ENCODE measurements at regions of chr17 and their contacts with region 1.

Region 1: DNA sequence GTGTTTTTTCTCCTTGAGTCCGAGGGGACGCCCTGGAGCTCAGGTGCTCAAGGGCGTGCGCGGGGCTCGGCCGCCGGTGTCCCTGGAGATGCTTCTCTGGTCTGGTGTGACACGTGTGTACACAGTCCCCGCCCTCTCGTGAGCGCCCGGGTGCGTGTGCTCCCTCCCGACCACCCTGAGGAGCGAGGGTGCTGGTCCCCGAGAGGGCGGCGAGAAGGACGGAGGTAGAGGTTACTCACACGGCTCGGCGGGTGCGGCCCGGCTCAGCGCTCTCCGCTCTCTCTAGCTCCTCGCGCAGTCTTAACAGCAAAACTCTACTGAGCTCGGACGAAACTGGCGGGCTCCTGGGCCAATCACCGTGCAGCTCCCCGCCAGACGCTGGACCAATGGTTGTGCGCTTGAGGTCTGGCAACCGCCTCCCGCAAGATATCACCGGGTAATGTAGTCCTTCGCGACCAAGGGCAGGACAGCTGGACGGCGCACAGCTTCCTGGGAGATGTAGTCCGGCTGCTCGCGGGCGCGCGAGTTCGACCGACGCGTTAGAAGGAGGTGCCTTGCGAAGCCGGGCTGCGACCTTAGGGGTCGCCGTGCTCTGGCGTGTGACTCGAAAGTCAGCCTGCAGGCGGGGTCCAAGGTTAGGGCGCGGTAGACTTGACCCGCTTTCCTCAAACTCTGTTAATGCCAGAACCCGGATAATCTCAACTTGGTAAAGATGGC is at the start of gene SLC25A19:
- DNase-seq: peak; percentile 99
- H3K4me3 Mint-ChIP-seq: peak within 1 kb of the TSS; percentile 98
- H3K27ac Mint-ChIP-seq: peak within 1 kb of the TSS; percentile 100
- H3K4me1 Mint-ChIP-seq: peaks cover 22% of the 10 kb centered on the region
- H3K27me3 Mint-ChIP-seq: no peaks in the 10 kb centered on the region
- total RNA-seq, gene SLC25A19: 27.6 to 30.5 TPM

Region 2: GRCh38 chr17:75277664-75278071 is 11.6 kb before region 1 on chr17:
- CTCF ChIA-PET with region 1: interaction called, 50 read pairs
- POLR2A ChIA-PET with region 1: interaction called, 3 read pairs
- DNase-seq: no peak
- H3K4me3 Mint-ChIP-seq: no peak overlapping the region
- H3K27ac Mint-ChIP-seq: no peak overlapping the region
- H3K4me1 Mint-ChIP-seq: peaks cover 13% of the 10 kb centered on the region
- H3K27me3 Mint-ChIP-seq: no peaks in the 10 kb centered on the region

Region 3: DNA sequence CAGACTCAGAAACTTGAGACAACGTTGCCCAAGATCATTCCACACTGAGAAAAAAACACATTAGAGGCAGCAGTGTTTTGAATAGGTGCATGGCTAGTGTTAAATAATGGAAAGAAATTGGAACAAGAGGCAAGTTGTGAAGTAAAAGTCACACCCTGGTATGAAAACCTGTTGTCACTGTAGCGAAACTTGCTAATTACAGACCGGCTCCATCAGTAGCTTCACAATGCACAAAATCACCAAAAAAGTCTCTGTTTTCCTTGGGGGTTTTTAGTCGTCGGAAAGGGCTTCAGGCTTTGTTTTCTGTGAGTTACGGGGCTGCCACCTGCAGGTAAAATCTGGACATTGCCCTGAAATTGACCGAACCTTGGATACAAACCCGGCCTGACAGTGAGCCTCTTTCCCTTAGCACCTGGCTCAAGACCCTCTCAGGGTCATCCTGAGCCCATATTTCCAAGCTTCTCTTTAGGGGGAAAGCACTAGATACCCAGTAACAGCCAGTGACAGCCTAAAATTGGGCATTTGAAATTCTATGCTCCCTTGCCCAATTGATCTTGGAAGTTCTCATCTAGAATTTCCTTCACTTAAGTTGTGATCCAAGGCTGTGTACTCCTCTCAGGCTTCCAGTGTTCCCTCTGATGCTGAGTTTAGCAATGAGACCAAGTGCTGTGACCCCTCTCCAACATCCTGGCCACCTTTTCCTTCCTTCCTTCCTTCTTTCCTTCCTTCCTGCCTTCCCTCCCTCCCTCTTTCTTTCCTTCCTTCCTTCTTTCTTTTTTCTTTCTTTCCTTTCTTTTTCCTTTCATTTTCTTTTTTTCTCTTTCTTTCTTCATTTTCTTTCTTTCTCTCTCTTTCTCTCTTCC is 123.4 kb after region 1 on chr17:
- CTCF ChIA-PET with region 1: interaction called, 12 read pairs
- POLR2A ChIA-PET with region 1: interaction called, 3 read pairs
- DNase-seq: peak; percentile 83
- H3K4me3 Mint-ChIP-seq: peak overlapping the region; percentile 5
- H3K27ac Mint-ChIP-seq: peak overlapping the region; percentile 61
- H3K4me1 Mint-ChIP-seq: peaks cover 30% of the 10 kb centered on the region
- H3K27me3 Mint-ChIP-seq: peaks cover 7% of the 10 kb centered on the region

Measured in activated CD4-positive, alpha-beta T cell treated with anti-CD3 and anti-CD28 coated beads, Interleukin-2, amount 10 ng/mL, durations not matched to agents 7 days and 5 days (primary cell).